ENCODE measurements at regions of chr1 and their contacts with region 1.

Region 1: DNA sequence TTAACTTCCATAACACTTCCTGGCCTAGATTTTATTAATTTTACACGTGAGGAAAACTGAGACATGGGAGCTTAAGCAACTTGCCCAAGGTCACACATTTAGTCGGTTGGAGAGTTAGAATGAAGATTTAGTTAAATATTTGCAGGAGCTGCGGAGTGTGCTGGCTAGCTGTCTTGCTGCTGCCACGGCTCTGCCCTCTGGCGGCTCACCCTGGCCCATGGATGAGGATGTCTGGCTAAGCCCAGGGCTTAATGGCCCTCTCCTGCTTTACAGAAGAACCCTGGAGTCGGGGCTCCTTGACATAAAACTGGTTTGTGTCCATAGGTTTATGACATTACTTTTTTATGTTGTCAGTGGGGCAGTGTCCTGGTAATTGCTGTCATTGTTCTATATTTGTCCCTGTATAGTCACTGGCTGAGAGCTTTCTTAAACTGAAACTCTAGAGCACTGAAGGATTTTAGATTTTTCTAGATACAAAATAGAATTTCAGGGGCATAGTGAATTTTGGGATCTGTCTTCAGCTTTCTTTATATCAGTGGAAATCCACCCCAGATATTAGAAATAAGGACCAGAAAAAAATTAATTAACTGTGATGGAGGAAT is 88.9 kb upstream of the WLS start:
- H3K4me3 ChIP-seq: no peak overlapping the region
- H3K27ac ChIP-seq: no peak overlapping the region
- H3K4me1 ChIP-seq: no peaks in the 10 kb centered on the region
- CTCF ChIP-seq: peak; percentile 40; the same call in 1 of the 2 replicates

Region 2: GRCh38 chr1:68346188-68346808 is 25.1 kb after region 1 on chr1:
- CTCF ChIA-PET with region 1: interaction called, 10 read pairs
- POLR2A ChIA-PET with region 1: interaction called, 6 read pairs
- H3K4me3 ChIP-seq: no peak overlapping the region
- H3K27ac ChIP-seq: no peak overlapping the region
- H3K4me1 ChIP-seq: no peaks in the 10 kb centered on the region
- CTCF ChIP-seq: no peak

Region 3: DNA sequence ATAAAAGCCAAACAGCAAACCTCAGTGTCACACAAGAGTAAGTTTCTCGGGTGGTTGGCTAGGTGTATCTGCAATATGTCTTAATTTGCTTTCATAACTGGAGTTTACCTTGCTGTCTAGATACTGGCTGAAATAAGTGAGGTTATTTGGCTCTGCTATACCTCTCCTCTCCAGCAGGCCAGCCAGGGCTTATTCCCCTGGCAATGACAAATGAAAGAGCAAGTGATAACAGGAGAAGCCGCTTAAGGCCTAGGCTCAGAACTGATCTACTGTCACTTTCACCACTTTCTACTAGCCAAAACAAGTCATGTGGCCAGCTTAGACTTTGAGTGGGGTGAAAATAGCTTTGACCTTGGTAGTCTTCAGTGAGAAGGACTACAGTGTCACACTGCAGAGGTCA is 133.3 kb after region 1 on chr1:
- CTCF ChIA-PET with region 1: no interaction called
- POLR2A ChIA-PET with region 1: no interaction called
- H3K4me3 ChIP-seq: no peak overlapping the region
- H3K27ac ChIP-seq: no peak overlapping the region
- H3K4me1 ChIP-seq: no peaks in the 10 kb centered on the region
- CTCF ChIP-seq: no peak